ENCODE measurements at regions of chr5 and their contacts with region 1.

Region 1: GRCh38 chr5:171418316-171418981 is 998 bp upstream of the FGF18 start:
- DNase-seq: peak; percentile 45
- H3K4me3 Mint-ChIP-seq: peak overlapping the region; percentile 62
- H3K27ac Mint-ChIP-seq: no peak overlapping the region
- H3K4me1 Mint-ChIP-seq: peaks cover 5% of the 10 kb centered on the region
- H3K27me3 Mint-ChIP-seq: peaks cover 24% of the 10 kb centered on the region

Region 2: GRCh38 chr5:171606414-171607024 is 188.1 kb after region 1 on chr5:
- intact Hi-C with region 1: loop called (anchors 2 kb)
- DNase-seq: no peak
- H3K4me3 Mint-ChIP-seq: no peak overlapping the region
- H3K27ac Mint-ChIP-seq: no peak overlapping the region
- H3K4me1 Mint-ChIP-seq: no peaks in the 10 kb centered on the region
- H3K27me3 Mint-ChIP-seq: peaks cover 10% of the 10 kb centered on the region

Region 3: DNA sequence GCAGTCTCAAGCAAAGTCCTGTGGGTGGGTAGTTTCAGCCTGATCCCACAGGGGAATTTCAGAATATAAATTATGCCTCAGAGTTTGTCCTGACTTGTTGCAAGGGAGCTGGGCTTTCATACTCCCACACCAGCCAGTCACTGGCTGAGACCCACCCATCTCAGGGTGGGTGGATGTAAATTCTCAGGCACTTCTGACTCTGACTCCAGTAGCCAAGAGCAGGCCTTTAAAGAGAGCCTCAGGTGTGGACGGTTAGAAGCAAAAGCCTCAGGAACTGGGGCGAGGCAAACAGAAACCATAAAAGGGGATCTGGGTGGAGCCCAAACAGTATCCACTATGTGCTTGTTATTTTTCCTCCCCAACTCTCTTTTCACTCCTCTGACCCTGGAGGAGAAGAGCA is 616.6 kb after region 1 on chr5:
- intact Hi-C with region 1: loop called (anchors 1 kb)
- DNase-seq: no peak
- H3K4me3 Mint-ChIP-seq: no peak overlapping the region
- H3K27ac Mint-ChIP-seq: peak overlapping the region; percentile 20
- H3K4me1 Mint-ChIP-seq: peaks cover 13% of the 10 kb centered on the region
- H3K27me3 Mint-ChIP-seq: peaks cover 2% of the 10 kb centered on the region

Region 4: GRCh38 chr5:172059661-172060100 is 641.2 kb after region 1 on chr5:
- intact Hi-C with region 1: loop called (anchors 10 kb)
- DNase-seq: no peak
- H3K4me3 Mint-ChIP-seq: no peak overlapping the region
- H3K27ac Mint-ChIP-seq: peak overlapping the region; percentile 8
- H3K4me1 Mint-ChIP-seq: peaks cover 21% of the 10 kb centered on the region
- H3K27me3 Mint-ChIP-seq: no peaks in the 10 kb centered on the region